CD8-positive, alpha-beta T cell (primary cell): ENCODE measurements at regions of chr3 and their contacts with region 1.

Region 1: GRCh38 chr3:151468284-151468917 is 7.5 kb upstream of the IGSF10 start:
- DNase-seq: peak in 7 of 9 experiments; percentile 6 to 68 (median 28)
- ATAC-seq: no peak
- H3K4me3 ChIP-seq: no peak overlapping the region
- H3K4me3 Mint-ChIP-seq: no peak overlapping the region
- H3K27ac ChIP-seq: no peak overlapping the region
- H3K27ac Mint-ChIP-seq: no peak overlapping the region
- H3K4me1 ChIP-seq: no peaks in the 10 kb centered on the region
- H3K4me1 Mint-ChIP-seq: no peaks in the 10 kb centered on the region
- H3K27me3 ChIP-seq: no peaks in the 10 kb centered on the region
- H3K27me3 Mint-ChIP-seq: peaks cover 5% of the 10 kb centered on the region
- CTCF ChIP-seq: peak; percentile 75

Region 2: GRCh38 chr3:151838583-151839312 is 370.3 kb after region 1 on chr3:
- CTCF ChIA-PET with region 1: interaction called, 4 read pairs
- POLR2A ChIA-PET with region 1: no interaction called
- intact Hi-C with region 1: loop called in 1 of 2 experiments (anchors 10 kb)
- DNase-seq: peak in 5 of 9 experiments; percentile 2 to 63 (median 30)
- ATAC-seq: peak; percentile 49
- H3K4me3 ChIP-seq: no peak overlapping the region
- H3K4me3 Mint-ChIP-seq: no peak overlapping the region
- H3K27ac ChIP-seq: no peak overlapping the region
- H3K27ac Mint-ChIP-seq: no peak overlapping the region
- H3K4me1 ChIP-seq: no peaks in the 10 kb centered on the region
- H3K4me1 Mint-ChIP-seq: no peaks in the 10 kb centered on the region
- H3K27me3 ChIP-seq: peaks cover 0 to 2% of the 10 kb centered on the region in 2 experiments
- H3K27me3 Mint-ChIP-seq: peaks cover 9% of the 10 kb centered on the region
- CTCF ChIP-seq: peak; percentile 59

Region 3: GRCh38 chr3:151918253-151919029 is 450.0 kb after region 1 on chr3:
- CTCF ChIA-PET with region 1: interaction called, 19 read pairs
- POLR2A ChIA-PET with region 1: no interaction called
- intact Hi-C with region 1: loop called (anchors 1 to 2 kb)
- DNase-seq: peak in 2 of 9 experiments; percentile 46 to 64
- ATAC-seq: no peak
- H3K4me3 ChIP-seq: no peak overlapping the region
- H3K4me3 Mint-ChIP-seq: no peak overlapping the region
- H3K27ac ChIP-seq: no peak overlapping the region
- H3K27ac Mint-ChIP-seq: no peak overlapping the region
- H3K4me1 ChIP-seq: no peaks in the 10 kb centered on the region
- H3K4me1 Mint-ChIP-seq: no peaks in the 10 kb centered on the region
- H3K27me3 ChIP-seq: no peaks in the 10 kb centered on the region
- H3K27me3 Mint-ChIP-seq: no peaks in the 10 kb centered on the region
- CTCF ChIP-seq: peak; percentile 63

Region 4: DNA sequence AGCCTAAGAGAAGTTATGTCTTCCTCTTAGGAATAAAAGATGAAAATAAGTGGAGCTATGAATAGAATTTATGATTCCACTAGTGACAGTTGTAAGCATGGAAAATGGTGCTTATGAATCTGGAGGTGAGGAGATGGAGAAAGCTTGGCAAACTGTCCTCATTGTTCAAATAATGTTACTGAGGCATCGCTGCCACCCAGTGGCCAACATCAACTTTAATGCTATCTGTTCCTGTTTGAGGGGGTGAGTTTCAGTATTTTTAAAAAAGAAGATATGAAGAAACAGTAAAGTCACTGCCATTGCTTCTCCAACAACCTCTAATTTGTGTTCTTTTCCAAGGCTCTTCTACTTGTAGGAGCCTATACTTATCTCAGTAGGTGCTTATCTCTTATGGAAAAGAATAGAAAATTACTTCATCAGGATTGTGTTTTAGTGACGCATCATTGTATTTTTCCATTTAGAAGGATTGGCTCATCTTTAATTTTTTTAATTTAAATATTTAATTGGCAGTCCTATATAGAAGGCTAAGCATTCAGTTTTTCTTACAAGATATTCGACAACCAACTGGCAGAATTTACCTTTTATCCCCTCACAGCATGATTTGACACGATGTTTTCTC is 1106.2 kb after region 1 on chr3:
- CTCF ChIA-PET with region 1: interaction called, 3 read pairs
- POLR2A ChIA-PET with region 1: no interaction called
- intact Hi-C with region 1: loop called in 1 of 2 experiments (anchors 1 kb)
- DNase-seq: peak in 5 of 9 experiments; percentile 17 to 43 (median 19)
- ATAC-seq: no peak
- H3K4me3 ChIP-seq: no peak overlapping the region
- H3K4me3 Mint-ChIP-seq: no peak overlapping the region
- H3K27ac ChIP-seq: no peak overlapping the region
- H3K27ac Mint-ChIP-seq: no peak overlapping the region
- H3K4me1 ChIP-seq: no peaks in the 10 kb centered on the region
- H3K4me1 Mint-ChIP-seq: no peaks in the 10 kb centered on the region
- H3K27me3 ChIP-seq: no peaks in the 10 kb centered on the region
- H3K27me3 Mint-ChIP-seq: peaks cover 4% of the 10 kb centered on the region
- CTCF ChIP-seq: peak; percentile 43